ENCODE measurements at regions of chr3 and their contacts with region 1.

Region 1: GRCh38 chr3:173865900-173866496 is 468.5 kb downstream of the NLGN1 start:
- DNase-seq: no peak

Region 2: GRCh38 chr3:173750095-173750494 is 115.9 kb before region 1 on chr3:
- in situ Hi-C with region 1: loop called (anchors 25 kb)
- DNase-seq: no peak

Measured in SK-MEL-5 (cell line).